IMR-90 (cell line): ENCODE measurements at regions of chr16 and their contacts with region 1.

Region 1: GRCh38 chr16:81623363-81624102 is 155.6 kb upstream of the PLCG2 start:
- DNase-seq: peak; percentile 43
- ATAC-seq: peak; percentile 51
- H3K4me3 ChIP-seq: no peak overlapping the region
- H3K27ac ChIP-seq: no peak overlapping the region
- H3K4me1 ChIP-seq: peaks cover 6% of the 10 kb centered on the region
- H3K27me3 ChIP-seq: no peaks in the 10 kb centered on the region
- CTCF ChIP-seq: peak; percentile 71
- POLR2A ChIP-seq: no peak
- RAD21 ChIP-seq: peak; percentile 85

Region 2: GRCh38 chr16:81314603-81315270 is 308.8 kb before region 1 on chr16 and contains the start of gene GAN:
- CTCF ChIA-PET with region 1: no interaction called
- POLR2A ChIA-PET with region 1: no interaction called
- dilution Hi-C with region 1: no loop called
- in situ Hi-C with region 1: no loop called
- intact Hi-C with region 1: no loop called
- DNase-seq: peak; percentile 95
- ATAC-seq: peak; percentile 91
- H3K4me3 ChIP-seq: peak within 1 kb of the TSS; percentile 92
- H3K27ac ChIP-seq: peak within 1 kb of the TSS; percentile 71
- H3K4me1 ChIP-seq: peaks cover 12% of the 10 kb centered on the region
- H3K27me3 ChIP-seq: no peaks in the 10 kb centered on the region
- CTCF ChIP-seq: no peak
- POLR2A ChIP-seq: peak; percentile 75
- RAD21 ChIP-seq: no peak
- total RNA-seq, gene GAN: 5.7 and 9.2 TPM in 2 replicates

Region 3: DNA sequence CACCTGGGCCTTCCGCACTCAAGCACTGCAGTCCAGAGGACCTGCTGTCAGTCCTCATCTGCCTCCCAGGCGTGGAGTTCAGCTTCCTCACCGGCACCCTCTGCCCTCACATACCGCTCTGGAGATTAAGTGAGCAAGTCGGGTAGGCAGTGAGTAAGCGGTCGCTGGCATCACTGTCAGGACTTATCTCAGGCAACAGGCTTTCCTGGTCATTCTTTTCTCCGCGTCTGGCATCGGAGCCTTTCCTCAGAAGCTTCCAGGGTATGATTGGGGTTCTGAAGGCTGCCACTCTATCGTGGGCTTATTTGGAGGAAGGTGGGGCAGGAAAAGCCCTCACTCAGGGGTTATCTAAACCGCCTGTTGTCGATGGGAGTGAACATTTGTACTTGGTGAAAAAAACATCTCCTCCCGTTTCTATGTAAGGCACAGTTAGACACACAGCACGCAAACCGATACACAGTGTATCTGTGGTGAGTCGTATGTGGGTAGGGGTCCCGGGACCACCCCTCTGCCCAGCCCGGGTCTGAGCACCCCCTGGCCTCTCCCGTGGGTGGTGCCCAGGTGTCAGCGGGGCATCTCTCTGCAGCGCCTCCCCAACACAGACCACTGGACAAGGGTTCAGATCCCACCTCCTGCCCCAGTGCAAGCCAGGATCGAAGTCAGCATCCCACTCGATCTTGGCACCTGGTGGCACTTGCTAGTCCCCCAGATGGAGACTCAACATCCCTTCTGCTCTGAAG is 63.0 kb after region 1 on chr16:
- CTCF ChIA-PET with region 1: no interaction called
- POLR2A ChIA-PET with region 1: no interaction called
- dilution Hi-C with region 1: no loop called
- in situ Hi-C with region 1: no loop called
- intact Hi-C with region 1: no loop called
- DNase-seq: no peak
- ATAC-seq: no peak
- H3K4me3 ChIP-seq: no peak overlapping the region
- H3K27ac ChIP-seq: no peak overlapping the region
- H3K4me1 ChIP-seq: no peaks in the 10 kb centered on the region
- H3K27me3 ChIP-seq: no peaks in the 10 kb centered on the region
- CTCF ChIP-seq: no peak
- POLR2A ChIP-seq: no peak
- RAD21 ChIP-seq: no peak

Region 4: GRCh38 chr16:81696961-81697615 is 73.6 kb after region 1 on chr16:
- CTCF ChIA-PET with region 1: interaction called, 8 read pairs
- POLR2A ChIA-PET with region 1: no interaction called
- dilution Hi-C with region 1: no loop called
- in situ Hi-C with region 1: no loop called
- intact Hi-C with region 1: loop called (anchors 1 kb)
- DNase-seq: peak; percentile 54
- ATAC-seq: peak; percentile 40
- H3K4me3 ChIP-seq: no peak overlapping the region
- H3K27ac ChIP-seq: no peak overlapping the region
- H3K4me1 ChIP-seq: peaks cover 20% of the 10 kb centered on the region
- H3K27me3 ChIP-seq: no peaks in the 10 kb centered on the region
- CTCF ChIP-seq: peak; percentile 75
- POLR2A ChIP-seq: no peak
- RAD21 ChIP-seq: peak; percentile 76